Sigmoid colon (tissue), 7 donors: ENCODE measurements at regions of chr1 and their contacts with region 1.

Region 1: DNA sequence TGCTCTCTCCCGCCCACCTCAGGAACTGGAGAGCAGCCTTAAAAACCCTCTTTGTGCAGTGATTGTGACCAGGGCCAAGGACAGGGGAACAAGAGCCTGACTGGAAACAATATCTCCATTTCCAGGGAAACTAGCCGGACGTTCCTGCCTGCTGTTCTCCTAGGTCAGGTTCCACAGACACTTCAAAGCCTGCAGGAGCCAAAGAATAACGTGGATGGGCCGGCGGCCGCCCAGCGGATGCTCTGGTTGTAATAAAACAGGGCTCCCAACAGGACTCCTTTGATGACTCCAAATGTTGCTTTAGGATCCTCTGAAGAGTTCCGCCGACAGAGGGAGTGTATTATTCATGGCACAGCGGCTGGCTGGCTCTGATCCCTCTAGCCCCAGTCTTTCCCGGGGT is 162.2 kb downstream of the PLXNA2 start:
- DNase-seq: no peak
- H3K4me3 ChIP-seq: no peak overlapping the region
- H3K27ac ChIP-seq: no peak overlapping the region
- H3K4me1 ChIP-seq: peaks cover 0 to 12% (median 10%) of the 10 kb centered on the region in 4 donors
- H3K27me3 ChIP-seq: no peaks in the 10 kb centered on the region
- CTCF ChIP-seq: no peak
- EP300 ChIP-seq: no peak
- POLR2A ChIP-seq: no peak

Region 2: DNA sequence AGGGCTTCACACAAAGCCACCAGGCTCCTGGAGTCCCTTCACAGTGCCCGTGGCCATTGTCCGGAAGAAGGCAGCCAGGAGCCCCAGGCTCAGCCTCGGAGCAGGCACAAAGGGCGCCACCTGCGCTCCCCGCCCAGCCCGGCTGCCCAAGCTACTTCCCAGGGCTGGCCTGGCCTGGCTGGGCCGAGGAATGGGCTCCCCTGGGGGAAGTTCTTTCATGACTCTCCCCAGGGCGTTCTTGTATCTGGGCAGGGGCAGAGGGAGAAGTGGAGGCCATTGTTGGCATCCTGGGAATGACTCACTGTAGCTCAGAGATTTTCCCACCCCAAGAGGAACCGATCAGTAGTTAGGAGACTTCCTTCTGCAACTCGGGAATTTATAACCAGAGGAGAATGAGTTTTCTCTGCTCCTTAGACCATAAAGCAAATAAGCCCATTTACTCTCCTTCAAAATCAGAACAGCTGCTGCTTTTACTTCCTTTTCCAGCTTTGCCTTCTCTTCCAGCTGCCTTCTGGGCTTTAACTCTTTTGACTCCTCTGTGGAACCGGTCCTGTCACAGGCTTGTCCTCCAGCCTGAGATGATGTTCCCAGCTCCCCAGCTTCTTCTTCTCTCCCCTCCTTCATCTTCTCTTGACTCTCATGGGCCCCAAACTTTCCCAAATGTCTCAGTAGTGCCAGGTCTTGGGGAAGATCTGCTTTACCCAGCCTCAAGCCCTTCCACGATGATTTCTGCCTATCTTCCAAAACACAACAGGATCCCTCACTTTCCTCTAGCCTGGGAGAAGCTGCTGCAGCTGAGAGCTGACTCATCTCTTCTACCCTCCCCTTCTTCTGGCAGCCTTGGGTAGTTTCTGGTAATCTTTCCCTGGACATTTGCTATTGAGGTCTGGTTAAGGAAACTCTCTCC is 52.3 kb before region 1 on chr1:
- intact Hi-C with region 1: loop called (anchors 5 kb)
- DNase-seq: no peak
- H3K4me3 ChIP-seq: no peak overlapping the region
- H3K27ac ChIP-seq: peak overlapping the region; percentile 67 to 75 (median 69)
- H3K4me1 ChIP-seq: peaks cover 0 to 32% (median 28%) of the 10 kb centered on the region in 4 donors
- H3K27me3 ChIP-seq: no peaks in the 10 kb centered on the region
- CTCF ChIP-seq: no peak
- EP300 ChIP-seq: no peak
- POLR2A ChIP-seq: no peak

Region 3: DNA sequence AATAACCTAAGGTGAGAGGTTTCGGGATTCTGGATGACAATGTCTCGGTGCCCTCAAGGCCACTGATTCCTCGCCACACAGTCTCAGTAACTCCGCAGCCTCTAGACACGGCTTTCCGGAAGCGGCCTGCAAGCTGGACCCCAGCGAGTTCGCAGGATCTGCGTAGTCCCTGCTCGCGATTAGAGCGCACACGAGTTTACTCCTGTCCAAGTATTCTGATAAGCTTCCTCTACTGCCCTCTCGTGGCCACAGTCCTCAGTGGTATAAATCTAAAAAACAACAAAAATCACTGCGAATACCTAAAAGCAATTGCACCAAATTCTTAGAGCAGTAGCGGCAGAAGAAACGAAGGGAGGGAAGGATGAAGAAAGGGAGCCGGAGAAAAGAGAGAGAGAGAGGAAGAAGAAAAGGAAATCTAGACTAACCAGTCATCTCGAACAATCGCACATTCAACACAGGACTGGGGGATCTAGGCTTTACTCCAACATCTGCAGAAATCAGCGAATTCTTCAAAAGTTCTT is 163.3 kb after region 1 on chr1:
- intact Hi-C with region 1: loop called (anchors 2 kb)
- DNase-seq: peak; percentile 96
- H3K4me3 ChIP-seq: peak overlapping the region in 3 of 4 donors; percentile 83 to 91 (median 84)
- H3K27ac ChIP-seq: peak overlapping the region; percentile 83 to 91 (median 88)
- H3K4me1 ChIP-seq: peaks cover 0 to 37% (median 33%) of the 10 kb centered on the region in 4 donors
- H3K27me3 ChIP-seq: no peaks in the 10 kb centered on the region
- CTCF ChIP-seq: peak; percentile 81 to 88 (median 84)
- EP300 ChIP-seq: no peak
- POLR2A ChIP-seq: no peak